Panc1 (cell line): ENCODE measurements at regions of chr13 and their contacts with region 1.

Region 1: DNA sequence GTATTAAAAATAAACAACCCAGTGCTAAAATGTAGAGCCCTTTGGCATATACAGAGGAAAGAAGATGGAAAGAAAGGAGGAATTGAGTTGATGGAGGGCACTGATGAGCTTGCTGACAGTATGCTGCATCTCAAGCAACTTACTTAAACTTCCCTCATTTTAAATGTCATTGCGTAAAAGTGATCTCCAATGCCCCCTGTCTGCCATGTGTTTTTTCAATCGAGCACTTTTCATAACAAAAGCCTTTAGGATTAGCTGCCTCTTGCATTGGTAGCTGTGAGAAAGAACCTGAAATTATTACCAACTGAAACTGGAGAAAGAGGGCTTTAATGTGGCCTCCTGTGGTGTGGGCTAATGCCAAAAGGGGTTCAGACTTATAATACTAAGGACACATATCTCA is 541.6 kb downstream of the SUCLA2 start:
- DNase-seq: no peak
- ATAC-seq: no peak
- H3K4me3 ChIP-seq: no peak overlapping the region
- H3K27ac ChIP-seq: no peak overlapping the region
- H3K4me1 ChIP-seq: no peaks in the 10 kb centered on the region
- H3K27me3 ChIP-seq: no peaks in the 10 kb centered on the region
- CTCF ChIP-seq: no peak

Region 2: GRCh38 chr13:47004540-47004939 is 455.0 kb before region 1 on chr13:
- CTCF ChIA-PET with region 1: no interaction called
- POLR2A ChIA-PET with region 1: interaction called, 11 read pairs
- in situ Hi-C with region 1: no loop called
- intact Hi-C with region 1: no loop called
- DNase-seq: no peak
- ATAC-seq: no peak
- H3K4me3 ChIP-seq: no peak overlapping the region
- H3K27ac ChIP-seq: no peak overlapping the region
- H3K4me1 ChIP-seq: no peaks in the 10 kb centered on the region
- H3K27me3 ChIP-seq: no peaks in the 10 kb centered on the region
- CTCF ChIP-seq: no peak